Activated T-helper 2 cell treated with anti-CD3 and anti-CD28 coated beads, Interferon-gamma antibody, Interleukin-2, Interleukin-4, amounts not matched to agents 10 μg/mL and 5 μg/mL and 100 μg/mL, durations not matched to agents 14 hours and 24 hours and 36 hours (primary cell): ENCODE measurements at regions of chr2 and their contacts with region 1.

Region 1: DNA sequence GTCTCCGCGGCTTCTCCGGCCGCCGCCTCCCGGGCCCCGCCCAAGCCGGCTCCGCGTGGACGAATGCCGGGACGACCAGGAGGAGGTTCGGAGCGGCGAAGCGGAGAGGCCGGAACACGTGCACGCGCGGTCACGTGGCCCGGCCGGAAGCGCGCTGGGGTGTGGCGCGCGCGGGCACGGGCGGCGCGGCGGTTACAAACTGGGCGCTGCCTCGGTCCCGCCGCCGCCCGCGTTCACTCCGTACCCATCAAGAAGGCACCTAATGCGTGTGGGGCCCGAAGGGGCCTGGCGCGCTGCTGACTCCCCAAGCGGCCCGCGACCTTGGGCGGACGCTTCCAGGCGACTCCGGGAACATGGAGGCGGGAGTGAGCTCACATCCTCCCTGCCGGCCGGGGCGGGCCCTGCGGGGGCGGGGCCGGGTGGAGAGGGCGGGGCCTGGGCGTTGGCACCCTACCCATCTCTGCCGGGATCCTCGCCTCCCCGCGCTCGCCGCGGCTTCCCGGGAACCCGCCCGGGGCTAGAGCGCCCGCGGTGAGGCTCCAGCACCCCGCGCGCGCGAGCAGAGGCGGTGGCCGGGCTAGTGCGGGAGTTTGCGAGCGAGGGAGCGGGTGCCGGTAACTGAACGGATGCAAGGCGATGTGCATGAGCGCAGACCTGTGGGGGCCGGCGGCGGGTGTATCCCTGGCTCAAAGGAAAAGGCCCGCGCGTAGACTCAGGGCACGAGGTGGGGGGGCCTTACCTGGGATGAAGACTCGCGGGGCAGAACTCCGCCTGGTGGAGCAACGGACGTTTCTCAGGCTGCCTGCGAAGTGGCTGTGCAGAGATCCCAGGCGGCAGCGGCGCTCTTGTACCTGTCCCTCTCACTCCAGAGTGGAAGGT is at the start of gene TMEM185B:
- DNase-seq: peak; percentile 88
- H3K4me3 Mint-ChIP-seq: peak within 1 kb of the TSS; percentile 82
- H3K27ac Mint-ChIP-seq: peak within 1 kb of the TSS; percentile 84
- H3K4me1 Mint-ChIP-seq: peaks cover 57% of the 10 kb centered on the region
- H3K27me3 Mint-ChIP-seq: no peaks in the 10 kb centered on the region
- total RNA-seq, gene TMEM185B: 38.7 and 39.3 TPM in 2 replicates

Region 2: GRCh38 chr2:119366649-119367471 is 856.4 kb before region 1 on chr2 and contains the starts of genes C2orf76 and DBI:
- intact Hi-C with region 1: loop called (anchors 5 kb)
- DNase-seq: peak; percentile 93
- H3K4me3 Mint-ChIP-seq: peak within 1 kb of the TSS; percentile 100
- H3K27ac Mint-ChIP-seq: peak within 1 kb of the TSS; percentile 99
- H3K4me1 Mint-ChIP-seq: peaks cover 34% of the 10 kb centered on the region
- H3K27me3 Mint-ChIP-seq: no peaks in the 10 kb centered on the region
- total RNA-seq, gene C2orf76: 11.0 and 13.3 TPM in 2 replicates
- total RNA-seq, gene DBI: 162 and 168 TPM in 2 replicates

Region 3: DNA sequence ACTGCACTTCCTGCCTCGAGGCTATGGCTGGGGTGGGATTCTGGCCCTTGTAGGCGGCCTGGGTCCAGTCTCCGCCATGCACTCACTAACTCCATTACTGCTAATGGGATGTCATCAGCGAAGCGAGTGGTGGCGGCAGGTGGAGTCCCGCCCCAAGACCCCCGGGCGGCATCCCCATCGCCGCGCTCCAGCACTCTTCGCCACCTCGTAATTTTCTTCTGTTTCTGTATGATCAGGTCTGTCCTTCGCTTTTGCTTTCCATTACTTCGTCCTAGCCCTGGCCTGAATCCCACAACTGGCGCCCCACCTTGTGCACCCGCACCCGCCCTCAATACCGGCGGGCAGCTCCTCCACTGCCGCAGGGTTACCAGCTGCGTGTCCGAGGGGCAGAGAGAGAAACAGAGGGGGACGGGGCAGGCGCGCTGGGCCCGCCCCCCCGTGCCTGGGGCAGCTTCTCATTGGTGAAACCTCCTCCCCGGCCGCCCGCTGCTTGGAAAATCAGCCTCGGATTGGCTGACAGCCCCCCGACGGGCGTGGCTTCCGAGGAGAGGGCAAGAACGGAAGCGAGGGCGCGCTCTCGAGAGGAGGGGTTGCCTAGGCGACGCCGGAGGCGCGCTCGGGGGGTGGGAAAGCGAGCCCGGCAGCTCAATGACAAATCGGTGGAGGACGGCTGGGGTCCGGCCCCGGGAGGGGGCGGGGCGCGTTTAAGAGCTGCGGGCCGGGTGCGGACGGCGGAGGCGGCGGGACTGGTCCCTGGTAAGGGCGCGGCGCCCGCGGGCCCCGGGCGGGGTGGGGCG is 29.1 kb after region 1 on chr2 and contains the start of gene RALB:
- intact Hi-C with region 1: loop called (anchors 2 kb)
- DNase-seq: peak; percentile 99
- H3K4me3 Mint-ChIP-seq: peak within 1 kb of the TSS; percentile 100
- H3K27ac Mint-ChIP-seq: peak within 1 kb of the TSS; percentile 93
- H3K4me1 Mint-ChIP-seq: peaks cover 53% of the 10 kb centered on the region
- H3K27me3 Mint-ChIP-seq: peaks cover 8% of the 10 kb centered on the region
- total RNA-seq, gene RALB: 58.4 and 65.0 TPM in 2 replicates

Region 4: DNA sequence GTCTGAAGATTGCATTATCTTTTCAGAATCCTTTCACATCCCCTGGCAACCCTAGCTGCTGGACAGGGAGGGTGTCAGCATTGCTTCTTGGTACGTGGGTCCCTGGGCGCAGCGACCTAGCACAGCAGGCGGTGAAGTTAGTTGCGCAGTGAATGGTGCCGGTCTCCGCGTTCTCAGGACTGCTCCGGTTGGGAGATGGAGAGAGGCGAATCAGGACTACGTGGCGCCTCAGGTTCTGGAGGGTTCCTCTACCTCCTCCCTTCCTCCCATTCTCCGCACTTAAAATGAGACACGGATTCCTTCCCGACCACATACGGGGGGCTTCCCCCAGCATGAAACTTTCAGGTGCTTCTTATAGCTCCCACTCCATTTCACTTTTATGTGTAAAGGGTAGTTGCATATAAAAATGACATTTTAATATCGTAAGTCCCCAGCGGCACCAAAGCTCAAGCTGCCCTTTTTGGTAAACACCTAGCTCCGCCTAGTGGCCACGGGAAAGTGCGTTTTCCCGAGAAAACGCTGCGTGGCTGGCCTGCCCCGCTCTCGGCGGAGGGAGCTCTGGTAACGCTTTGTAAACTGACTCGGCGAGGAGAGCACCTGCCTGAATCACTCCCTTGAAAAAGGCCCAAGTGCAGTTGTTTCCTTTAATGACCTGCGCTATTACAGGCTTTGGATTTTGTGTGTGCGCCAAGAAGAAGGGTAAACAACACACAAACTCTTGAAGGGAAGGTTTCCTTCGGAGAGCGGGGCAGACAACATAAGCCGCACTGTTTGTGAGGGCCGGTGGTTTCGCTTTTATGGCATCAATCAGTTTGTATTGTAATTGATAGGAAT is 89.8 kb after region 1 on chr2:
- intact Hi-C with region 1: loop called (anchors 2 kb)
- DNase-seq: peak; percentile 69
- H3K4me3 Mint-ChIP-seq: peak overlapping the region; percentile 67
- H3K27ac Mint-ChIP-seq: peak overlapping the region; percentile 58
- H3K4me1 Mint-ChIP-seq: peaks cover 29% of the 10 kb centered on the region
- H3K27me3 Mint-ChIP-seq: no peaks in the 10 kb centered on the region

Region 5: DNA sequence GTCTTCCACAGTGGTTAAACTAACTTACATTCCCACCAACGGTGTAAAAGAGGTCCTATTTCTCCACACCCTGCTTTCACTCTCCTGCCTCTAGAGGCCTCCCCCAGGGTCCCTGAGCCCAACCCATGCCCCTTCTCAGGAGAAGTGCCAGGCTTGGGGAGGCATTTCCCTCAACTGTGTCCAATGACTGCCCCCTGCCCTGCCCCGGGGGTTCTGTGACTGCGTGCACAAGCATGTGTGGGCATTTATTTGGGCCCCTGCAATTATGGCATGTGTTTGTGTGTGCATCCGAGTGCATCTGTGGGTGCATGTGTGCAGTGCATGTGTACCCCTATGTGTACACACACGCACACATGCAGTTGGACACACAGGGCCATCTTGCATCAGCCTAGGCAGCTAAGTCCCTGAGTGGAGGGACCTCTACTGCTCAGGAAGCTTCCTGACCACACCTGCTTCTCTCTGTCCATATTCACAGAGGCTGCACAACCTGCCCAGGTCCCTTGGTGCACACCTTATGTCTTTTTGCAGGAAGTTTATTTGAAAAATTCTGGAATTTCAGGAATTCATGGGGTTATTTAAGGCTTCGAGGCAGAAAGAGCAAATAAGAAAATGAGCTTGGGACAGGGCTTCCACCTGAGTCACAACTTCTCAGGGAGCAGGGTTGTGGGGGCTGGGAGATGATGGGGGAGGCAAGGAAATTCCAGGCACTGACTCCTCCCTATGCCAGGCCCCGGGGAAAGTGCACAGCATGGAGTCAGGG is 180.2 kb after region 1 on chr2:
- intact Hi-C with region 1: no loop called
- DNase-seq: no peak
- H3K4me3 Mint-ChIP-seq: no peak overlapping the region
- H3K27ac Mint-ChIP-seq: no peak overlapping the region
- H3K4me1 Mint-ChIP-seq: no peaks in the 10 kb centered on the region
- H3K27me3 Mint-ChIP-seq: no peaks in the 10 kb centered on the region